ENCODE measurements at regions of chr1 and their contacts with region 1.

Region 1: GRCh38 chr1:103788377-103788776 is 38.7 kb downstream of the AMY1C start:
- DNase-seq: no peak
- H3K4me3 ChIP-seq: no peak overlapping the region
- H3K4me3 Mint-ChIP-seq: no peak overlapping the region
- H3K27ac Mint-ChIP-seq: no peak overlapping the region
- H3K4me1 ChIP-seq: no peaks in the 10 kb centered on the region
- H3K4me1 Mint-ChIP-seq: no peaks in the 10 kb centered on the region
- H3K27me3 ChIP-seq: no peaks in the 10 kb centered on the region
- H3K27me3 Mint-ChIP-seq: no peaks in the 10 kb centered on the region
- CTCF ChIP-seq: no peak

Region 2: DNA sequence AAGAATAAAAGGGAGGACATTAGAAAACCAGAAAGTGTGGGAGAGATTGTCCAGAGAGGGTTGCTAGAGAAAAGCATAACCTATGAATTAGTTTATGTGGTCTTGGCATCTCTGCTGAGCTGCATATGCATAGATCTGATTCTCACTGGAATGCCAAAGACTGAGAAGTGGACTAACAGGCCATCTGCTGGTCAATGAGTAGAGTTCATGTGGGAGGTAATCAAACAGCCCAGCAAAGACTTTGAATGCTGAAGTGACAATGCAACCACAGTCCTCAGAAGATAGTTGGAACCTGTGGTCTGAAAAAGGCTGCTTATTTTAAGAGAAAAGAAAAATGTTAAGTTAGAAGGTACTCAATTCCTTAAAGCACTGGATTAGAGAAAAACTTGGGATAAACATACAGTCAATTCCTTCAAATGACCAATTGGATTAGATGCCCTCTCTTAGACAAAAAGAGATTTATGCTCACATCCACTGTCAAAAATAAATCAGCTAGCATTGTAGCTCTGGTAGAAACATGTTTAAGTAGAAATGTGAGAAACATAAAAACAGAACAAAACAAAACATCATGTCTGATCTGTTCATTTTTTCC is 344.1 kb after region 1 on chr1:
- CTCF ChIA-PET with region 1: no interaction called
- POLR2A ChIA-PET with region 1: no interaction called
- intact Hi-C with region 1: loop called (anchors 2 kb)
- DNase-seq: peak in 1 of 2 experiments; percentile 12
- H3K4me3 ChIP-seq: no peak overlapping the region
- H3K4me3 Mint-ChIP-seq: no peak overlapping the region
- H3K27ac Mint-ChIP-seq: no peak overlapping the region
- H3K4me1 ChIP-seq: no peaks in the 10 kb centered on the region
- H3K4me1 Mint-ChIP-seq: no peaks in the 10 kb centered on the region
- H3K27me3 ChIP-seq: no peaks in the 10 kb centered on the region
- H3K27me3 Mint-ChIP-seq: no peaks in the 10 kb centered on the region
- CTCF ChIP-seq: peak; percentile 33 to 43

Region 3: GRCh38 chr1:104264521-104264920 is 476.1 kb after region 1 on chr1:
- CTCF ChIA-PET with region 1: no interaction called
- POLR2A ChIA-PET with region 1: no interaction called
- intact Hi-C with region 1: loop called (anchors 5 kb)
- DNase-seq: no peak
- H3K4me3 ChIP-seq: no peak overlapping the region
- H3K4me3 Mint-ChIP-seq: no peak overlapping the region
- H3K27ac Mint-ChIP-seq: no peak overlapping the region
- H3K4me1 ChIP-seq: no peaks in the 10 kb centered on the region
- H3K4me1 Mint-ChIP-seq: no peaks in the 10 kb centered on the region
- H3K27me3 ChIP-seq: no peaks in the 10 kb centered on the region
- H3K27me3 Mint-ChIP-seq: no peaks in the 10 kb centered on the region
- CTCF ChIP-seq: no peak

Measured in Caco-2 (cell line).